CD14-positive monocyte (primary cell): ENCODE measurements at regions of chr6 and their contacts with region 1.

Region 1: GRCh38 chr6:30556066-30556905 is at the start of gene GNL1:
- DNase-seq: peak; percentile 88 to 96 (median 94)
- H3K4me3 ChIP-seq: peak within 1 kb of the TSS; percentile 73 to 93 (median 93)
- H3K4me3 Mint-ChIP-seq: peak within 1 kb of the TSS; percentile 95
- H3K27ac ChIP-seq: peak within 1 kb of the TSS; percentile 92 to 93
- H3K27ac Mint-ChIP-seq: peak within 1 kb of the TSS; percentile 95 to 100 (median 99)
- H3K4me1 ChIP-seq: peaks cover 20 to 28% of the 10 kb centered on the region in 2 donors
- H3K4me1 Mint-ChIP-seq: peaks cover 19% of the 10 kb centered on the region
- H3K27me3 ChIP-seq: no peaks in the 10 kb centered on the region
- H3K27me3 Mint-ChIP-seq: peaks cover 0 to 6% (median 4%) of the 10 kb centered on the region in 3 donors
- CTCF ChIP-seq: no peak
- polyA plus RNA-seq, gene GNL1: 10.3 to 13.4 (median 12.9) TPM

Region 2: DNA sequence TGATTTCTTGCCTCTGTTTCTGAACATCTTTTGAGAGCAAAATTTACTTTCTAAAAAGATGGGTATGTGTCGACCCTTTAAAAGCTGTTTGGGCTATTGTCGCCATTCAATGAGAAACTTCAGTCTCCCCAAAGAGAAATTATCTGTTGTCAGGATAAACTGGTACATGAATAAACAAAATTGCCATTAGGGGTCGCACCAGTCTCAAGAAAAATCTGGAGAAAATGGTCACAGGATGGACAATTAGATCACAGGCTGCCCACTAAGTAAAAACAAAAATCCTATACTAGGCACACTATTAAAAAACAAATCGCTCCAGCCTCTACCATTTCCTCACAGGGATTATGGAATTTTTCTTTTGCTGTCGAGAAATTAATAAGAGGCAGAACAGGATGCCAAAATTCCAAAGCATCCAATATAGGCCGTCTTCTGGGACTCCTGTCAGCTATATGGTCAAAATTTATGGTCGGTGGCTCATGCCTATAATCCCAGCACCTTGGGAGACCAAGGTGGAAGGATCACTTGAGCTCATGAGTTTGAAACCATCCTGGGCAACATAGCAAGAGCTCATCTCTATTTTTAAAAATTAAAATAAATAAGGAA is 72.5 kb before region 1 on chr6:
- intact Hi-C with region 1: no loop called
- DNase-seq: peak in 2 of 3 donors; percentile 66 to 70
- H3K4me3 ChIP-seq: no peak overlapping the region
- H3K4me3 Mint-ChIP-seq: peak overlapping the region in 1 of 2 donors; percentile 72
- H3K27ac ChIP-seq: no peak overlapping the region
- H3K27ac Mint-ChIP-seq: no peak overlapping the region
- H3K4me1 ChIP-seq: peaks cover 7 to 12% of the 10 kb centered on the region in 2 donors
- H3K4me1 Mint-ChIP-seq: peaks cover 25% of the 10 kb centered on the region
- H3K27me3 ChIP-seq: peaks cover 40 to 46% of the 10 kb centered on the region in 2 donors
- H3K27me3 Mint-ChIP-seq: peaks cover 43 to 52% (median 45%) of the 10 kb centered on the region in 3 donors
- CTCF ChIP-seq: peak; percentile 75

Region 3: DNA sequence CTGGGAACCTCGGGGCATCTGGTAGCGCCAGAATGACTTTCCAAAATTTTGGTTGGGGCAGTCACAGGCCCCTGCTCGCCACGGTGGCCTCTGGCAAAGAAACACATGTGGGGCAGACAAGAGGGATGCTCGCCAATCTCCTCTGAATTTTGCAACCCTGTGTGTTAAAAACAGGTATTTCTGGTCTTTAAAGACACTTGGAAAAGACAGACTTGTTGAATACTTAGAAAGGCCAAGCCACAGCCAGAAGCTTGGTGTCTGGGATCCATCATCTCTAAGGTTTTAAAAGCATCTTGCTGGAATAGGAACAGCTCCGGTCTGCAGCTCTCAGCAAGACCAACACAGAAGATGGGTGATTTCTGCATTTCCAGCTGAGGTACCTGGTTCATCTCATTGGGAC is 35.8 kb before region 1 on chr6:
- intact Hi-C with region 1: no loop called
- DNase-seq: no peak
- H3K4me3 ChIP-seq: no peak overlapping the region
- H3K4me3 Mint-ChIP-seq: no peak overlapping the region
- H3K27ac ChIP-seq: no peak overlapping the region
- H3K27ac Mint-ChIP-seq: no peak overlapping the region
- H3K4me1 ChIP-seq: peaks cover 15 to 21% of the 10 kb centered on the region in 2 donors
- H3K4me1 Mint-ChIP-seq: peaks cover 38% of the 10 kb centered on the region
- H3K27me3 ChIP-seq: no peaks in the 10 kb centered on the region
- H3K27me3 Mint-ChIP-seq: peaks cover 0 to 3% (median 0%) of the 10 kb centered on the region in 3 donors
- CTCF ChIP-seq: no peak

Region 4: GRCh38 chr6:30571075-30571768 is 14.9 kb after region 1 on chr6 and contains the start of gene ABCF1:
- intact Hi-C with region 1: loop called (anchors 2 kb)
- DNase-seq: peak; percentile 95 to 98 (median 98)
- H3K4me3 ChIP-seq: peak within 1 kb of the TSS; percentile 76 to 87 (median 79)
- H3K4me3 Mint-ChIP-seq: peak within 1 kb of the TSS; percentile 96 to 99
- H3K27ac ChIP-seq: peak within 1 kb of the TSS; percentile 93 to 97
- H3K27ac Mint-ChIP-seq: peak within 1 kb of the TSS; percentile 98 to 100 (median 99)
- H3K4me1 ChIP-seq: peaks cover 23 to 33% of the 10 kb centered on the region in 2 donors
- H3K4me1 Mint-ChIP-seq: peaks cover 40% of the 10 kb centered on the region
- H3K27me3 ChIP-seq: no peaks in the 10 kb centered on the region
- H3K27me3 Mint-ChIP-seq: peaks cover 1 to 5% (median 3%) of the 10 kb centered on the region in 3 donors
- CTCF ChIP-seq: no peak
- polyA plus RNA-seq, gene ABCF1: 7.5 to 19.8 (median 14.6) TPM